ENCODE measurements at regions of chr15 and their contacts with region 1.

Region 1: DNA sequence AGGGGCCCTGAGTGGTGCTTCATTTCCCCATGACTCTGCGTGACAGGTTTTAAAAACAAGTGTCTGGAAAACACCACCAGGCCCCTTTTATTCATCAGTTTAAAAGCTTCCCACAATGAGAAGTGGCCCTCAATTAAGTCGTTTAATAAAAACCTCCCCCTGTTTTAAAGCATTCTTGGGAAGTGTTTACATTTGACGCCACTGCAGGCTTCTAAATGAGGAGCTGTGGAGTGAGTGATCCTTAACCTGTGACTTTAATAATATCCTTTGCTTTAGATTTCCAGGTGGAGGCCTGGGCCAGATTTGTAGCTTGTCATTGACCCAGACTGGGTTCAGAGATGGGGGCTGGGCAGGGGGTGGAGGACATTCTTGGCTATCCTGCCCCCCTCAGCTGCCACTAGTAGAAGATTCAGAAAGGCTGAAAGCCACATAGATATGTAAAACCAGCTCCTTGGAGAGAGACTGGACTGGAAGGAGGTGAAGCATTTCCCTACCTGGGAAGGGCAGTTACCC is 11.3 kb downstream of the CGNL1 start:
- DNase-seq: no peak
- H3K4me3 ChIP-seq: peak overlapping the region; percentile 42 to 56 (median 46); a peak in 7 of 8 replicates
- H3K27ac ChIP-seq: peak overlapping the region; percentile 68; the same call in 1 of the 2 replicates
- H3K4me1 ChIP-seq: peaks cover 12 to 45% (median 35%) of the 10 kb centered on the region in 4 experiments; a peak in 6 of 7 replicates
- H3K27me3 ChIP-seq: no peaks in the 10 kb centered on the region
- CTCF ChIP-seq: no peak
- EP300 ChIP-seq: no peak
- POLR2A ChIP-seq: 0 out of 3 replicates have a peak, but pooled peaks of 1 of the 2 experiments have one; percentile 21
- RAD21 ChIP-seq: peak in 1 of 2 experiments; percentile 15; a peak in 1 of 4 replicates

Region 2: DNA sequence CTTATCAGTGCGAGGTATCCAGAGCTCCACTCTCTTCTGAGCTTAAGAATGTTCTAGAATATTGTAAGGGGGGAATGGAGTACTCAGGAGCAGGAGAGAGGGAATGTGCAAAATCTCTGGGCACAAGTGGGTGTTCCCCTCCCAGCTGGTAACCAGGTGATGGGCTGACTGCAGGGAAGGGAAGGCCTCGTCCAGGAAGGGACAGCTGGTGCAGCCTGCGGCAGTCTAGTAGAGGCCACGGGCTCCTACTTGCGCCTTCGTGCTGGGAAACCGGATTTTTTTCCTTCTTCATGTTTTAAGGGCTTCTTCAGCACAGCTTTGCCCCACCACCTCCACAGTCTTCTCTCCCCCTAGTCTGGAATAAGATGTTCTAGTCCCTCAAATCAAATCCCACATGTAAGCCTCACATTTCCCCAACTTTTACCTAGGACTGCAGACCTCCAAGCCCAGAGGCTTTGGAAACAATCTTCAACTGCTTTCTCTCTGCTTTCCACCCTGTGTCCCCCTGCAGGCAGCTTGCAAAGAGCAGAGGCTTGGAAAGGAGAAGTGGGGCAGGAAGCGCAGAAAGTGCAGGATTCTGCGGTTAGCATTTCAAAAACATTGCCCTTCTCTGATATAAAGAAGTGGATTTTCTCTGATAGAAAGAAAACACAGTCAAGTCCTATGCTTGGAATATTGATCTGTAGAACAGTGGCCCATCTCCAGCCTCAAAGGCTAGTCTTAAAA is 23.2 kb before region 1 on chr15:
- CTCF ChIA-PET with region 1: interaction called, 18 read pairs
- POLR2A ChIA-PET with region 1: interaction called, 8 read pairs
- DNase-seq: no peak
- H3K4me3 ChIP-seq: no peak overlapping the region
- H3K27ac ChIP-seq: no peak overlapping the region
- H3K4me1 ChIP-seq: peaks cover 0 to 7% (median 4%) of the 10 kb centered on the region in 4 experiments; a peak in 5 of 7 replicates
- H3K27me3 ChIP-seq: no peaks in the 10 kb centered on the region
- CTCF ChIP-seq: peak; percentile 36 to 54 (median 39); a peak in 3 of 4 replicates
- EP300 ChIP-seq: no peak
- POLR2A ChIP-seq: no peak
- RAD21 ChIP-seq: peak in 1 of 2 experiments; percentile 52; a peak in 2 of 4 replicates

Region 3: DNA sequence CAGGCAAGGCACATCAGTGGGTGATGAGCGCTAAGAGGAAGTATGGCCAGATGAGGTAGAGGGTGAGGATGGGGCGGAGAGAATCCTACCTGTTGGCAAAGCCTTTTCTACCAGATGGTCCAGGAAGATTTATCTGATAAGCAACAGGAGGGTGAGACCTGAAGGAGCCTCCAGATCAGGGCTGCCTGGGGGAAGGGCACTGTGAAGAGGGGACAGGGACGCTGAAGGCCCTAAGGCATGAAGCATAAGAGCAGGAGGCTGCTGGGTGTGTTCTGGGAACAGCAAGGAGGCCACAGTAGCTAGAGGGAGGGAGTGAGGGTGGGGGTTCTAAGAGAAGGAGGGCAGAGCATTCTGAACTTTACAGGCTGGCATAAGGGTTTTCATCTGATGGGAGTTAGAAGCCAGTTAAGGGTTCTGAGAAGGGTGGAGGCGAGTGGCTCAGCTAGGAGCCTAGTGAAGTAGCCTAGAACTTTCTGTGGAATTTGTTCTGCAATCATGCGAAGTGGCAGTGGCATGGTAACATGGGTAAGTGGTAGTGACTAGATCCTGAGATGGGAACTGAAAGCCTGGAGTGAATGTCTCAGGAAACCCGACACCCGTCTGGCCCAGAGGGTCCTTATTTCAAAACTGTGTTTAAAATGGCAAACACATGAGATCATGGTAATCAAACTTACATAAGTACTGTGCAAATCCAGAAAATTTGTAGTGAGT is 18.6 kb after region 1 on chr15:
- CTCF ChIA-PET with region 1: interaction called, 3 read pairs
- POLR2A ChIA-PET with region 1: interaction called, 103 read pairs
- DNase-seq: no peak
- H3K4me3 ChIP-seq: no peak overlapping the region
- H3K27ac ChIP-seq: no peak overlapping the region
- H3K4me1 ChIP-seq: peaks cover 7 to 24% (median 14%) of the 10 kb centered on the region in 4 experiments
- H3K27me3 ChIP-seq: no peaks in the 10 kb centered on the region
- CTCF ChIP-seq: no peak
- EP300 ChIP-seq: no peak
- POLR2A ChIP-seq: no peak
- RAD21 ChIP-seq: no peak

Measured in H1 (cell line).